B cell (primary cell): ENCODE measurements at regions of chr22 and their contacts with region 1.

Region 1: DNA sequence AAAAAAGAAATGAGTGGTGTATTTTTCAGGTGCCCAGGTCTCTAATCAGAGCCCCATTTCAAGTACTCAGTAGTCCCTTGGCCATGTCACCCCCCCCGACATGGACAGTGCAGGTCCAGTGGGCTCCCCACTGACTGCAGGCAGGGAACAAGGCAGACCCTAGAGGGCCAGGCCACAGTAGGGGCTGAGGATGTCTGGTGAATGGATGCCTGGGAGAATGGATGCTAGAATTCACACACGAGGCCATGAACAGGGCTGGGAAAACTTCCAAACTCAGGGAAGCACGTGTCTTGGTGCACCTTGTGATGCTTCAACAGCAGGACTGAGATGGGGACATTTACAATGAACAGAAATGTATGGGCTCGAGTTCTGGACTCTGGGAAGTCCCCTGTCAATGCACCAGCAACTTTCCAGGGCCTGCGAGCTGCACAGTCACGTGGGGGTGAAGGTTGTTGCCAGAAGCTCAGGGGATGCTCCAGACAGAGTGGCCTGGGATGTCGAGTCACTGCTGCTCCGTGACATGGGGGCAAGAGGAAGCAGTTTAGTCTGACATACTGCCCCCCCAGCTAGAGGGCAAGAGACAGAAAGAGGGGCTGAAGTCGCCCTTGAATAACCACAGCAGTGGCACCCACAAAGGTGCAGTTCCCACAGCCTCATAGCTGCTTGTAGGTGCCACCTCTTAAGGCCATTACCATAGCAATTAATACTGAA is 3.1 kb downstream of the APOBEC3G start:
- DNase-seq: peak; percentile 72
- ATAC-seq: peak; percentile 14
- H3K4me3 ChIP-seq: no peak overlapping the region
- H3K4me3 Mint-ChIP-seq: peak overlapping the region; percentile 68
- H3K27ac ChIP-seq: peak overlapping the region; percentile 63 to 72
- H3K27ac Mint-ChIP-seq: peak overlapping the region; percentile 88
- H3K4me1 ChIP-seq: peaks cover 31 to 52% of the 10 kb centered on the region in 2 donors
- H3K4me1 Mint-ChIP-seq: peaks cover 48% of the 10 kb centered on the region
- H3K27me3 ChIP-seq: no peaks in the 10 kb centered on the region
- H3K27me3 Mint-ChIP-seq: no peaks in the 10 kb centered on the region
- CTCF ChIP-seq: no peak

Region 2: DNA sequence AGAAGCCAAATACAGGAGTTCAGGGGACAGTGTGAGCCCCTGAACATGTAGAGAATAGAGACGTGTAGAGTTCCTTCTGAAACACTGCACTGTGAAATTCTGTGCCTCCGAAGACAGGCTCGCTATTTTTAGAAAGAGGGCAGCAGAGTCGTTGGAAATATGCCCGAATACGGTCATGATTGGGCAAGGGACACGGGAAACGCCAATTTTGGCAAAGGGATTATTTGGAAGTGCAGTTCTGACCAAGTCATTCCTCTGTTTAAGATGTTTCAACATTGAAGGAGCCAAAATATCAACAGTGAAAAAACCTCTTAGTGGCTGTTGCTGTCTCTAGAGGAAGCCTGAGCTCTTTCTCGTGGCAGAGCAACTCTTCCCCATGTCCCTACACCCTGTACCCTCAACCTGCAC is 198.7 kb before region 1 on chr22:
- CTCF ChIA-PET with region 1: no interaction called
- POLR2A ChIA-PET with region 1: no interaction called
- intact Hi-C with region 1: no loop called
- DNase-seq: peak; percentile 3
- ATAC-seq: no peak
- H3K4me3 ChIP-seq: no peak overlapping the region
- H3K4me3 Mint-ChIP-seq: no peak overlapping the region
- H3K27ac ChIP-seq: no peak overlapping the region
- H3K27ac Mint-ChIP-seq: no peak overlapping the region
- H3K4me1 ChIP-seq: no peaks in the 10 kb centered on the region
- H3K4me1 Mint-ChIP-seq: no peaks in the 10 kb centered on the region
- H3K27me3 ChIP-seq: peaks cover 0 to 12% (median 3%) of the 10 kb centered on the region in 4 experiments
- H3K27me3 Mint-ChIP-seq: peaks cover 39% of the 10 kb centered on the region
- CTCF ChIP-seq: no peak

Region 3: DNA sequence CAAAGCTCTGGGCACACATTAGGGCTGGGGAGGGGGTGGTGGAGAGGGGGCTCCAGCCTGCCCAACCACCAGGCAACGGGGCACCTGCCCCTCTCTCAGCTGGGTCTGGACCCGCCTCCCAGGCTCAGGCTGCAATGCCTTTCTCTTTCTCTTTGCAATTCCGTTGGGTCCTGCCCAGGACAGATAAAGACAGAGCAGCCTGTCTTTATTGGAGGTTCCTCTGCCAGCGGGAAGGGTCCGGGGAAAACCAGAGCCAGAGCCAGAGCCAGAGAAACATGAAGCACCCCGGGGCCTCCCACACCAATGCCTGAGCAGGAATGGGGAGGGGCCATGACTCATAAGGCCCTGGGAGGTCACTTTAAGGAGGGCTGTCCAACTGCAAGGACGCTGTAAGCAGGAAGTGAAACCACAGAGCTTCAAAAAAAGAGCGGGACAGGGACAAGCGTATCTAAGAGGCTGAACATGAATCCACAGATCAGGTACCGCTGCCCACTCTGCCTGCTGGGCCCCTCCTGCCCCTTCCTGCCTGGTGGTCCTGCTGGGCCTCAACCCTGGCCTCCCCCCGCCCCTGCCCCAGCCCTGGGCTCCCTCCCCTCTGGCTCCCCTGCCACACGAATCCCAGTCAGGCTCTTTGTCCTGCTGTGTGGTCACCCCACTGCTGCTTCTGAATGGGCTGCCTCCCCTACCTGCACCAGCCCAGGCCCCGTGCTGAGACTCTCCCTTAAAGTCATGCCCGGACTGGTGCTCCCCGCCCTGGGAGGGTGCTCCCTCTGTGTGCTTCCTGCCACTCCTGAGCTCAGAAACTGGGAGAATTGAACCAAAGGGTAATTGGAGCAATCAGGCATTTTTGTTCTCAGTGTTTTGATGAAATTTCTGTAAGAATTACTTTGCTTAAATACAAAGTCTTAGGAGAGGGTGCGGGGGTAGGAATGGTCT is 97.9 kb before region 1 on chr22 and contains the start of gene APOBEC3B:
- CTCF ChIA-PET with region 1: no interaction called
- POLR2A ChIA-PET with region 1: interaction called, 12 read pairs
- intact Hi-C with region 1: no loop called
- DNase-seq: peak; percentile 85
- ATAC-seq: peak; percentile 75
- H3K4me3 ChIP-seq: peak within 1 kb of the TSS in 4 of 5 experiments; percentile 43 to 74 (median 58)
- H3K4me3 Mint-ChIP-seq: peak within 1 kb of the TSS; percentile 97
- H3K27ac ChIP-seq: peak within 1 kb of the TSS in 1 of 2 donors; percentile 57
- H3K27ac Mint-ChIP-seq: peak within 1 kb of the TSS; percentile 92
- H3K4me1 ChIP-seq: peaks cover 11 to 39% of the 10 kb centered on the region in 2 donors
- H3K4me1 Mint-ChIP-seq: peaks cover 44% of the 10 kb centered on the region
- H3K27me3 ChIP-seq: no peaks in the 10 kb centered on the region
- H3K27me3 Mint-ChIP-seq: peaks cover under 1% of the 10 kb centered on the region
- CTCF ChIP-seq: no peak
- total RNA-seq, gene APOBEC3B: 7.9 and 9.8 TPM in 2 replicates

Region 4: DNA sequence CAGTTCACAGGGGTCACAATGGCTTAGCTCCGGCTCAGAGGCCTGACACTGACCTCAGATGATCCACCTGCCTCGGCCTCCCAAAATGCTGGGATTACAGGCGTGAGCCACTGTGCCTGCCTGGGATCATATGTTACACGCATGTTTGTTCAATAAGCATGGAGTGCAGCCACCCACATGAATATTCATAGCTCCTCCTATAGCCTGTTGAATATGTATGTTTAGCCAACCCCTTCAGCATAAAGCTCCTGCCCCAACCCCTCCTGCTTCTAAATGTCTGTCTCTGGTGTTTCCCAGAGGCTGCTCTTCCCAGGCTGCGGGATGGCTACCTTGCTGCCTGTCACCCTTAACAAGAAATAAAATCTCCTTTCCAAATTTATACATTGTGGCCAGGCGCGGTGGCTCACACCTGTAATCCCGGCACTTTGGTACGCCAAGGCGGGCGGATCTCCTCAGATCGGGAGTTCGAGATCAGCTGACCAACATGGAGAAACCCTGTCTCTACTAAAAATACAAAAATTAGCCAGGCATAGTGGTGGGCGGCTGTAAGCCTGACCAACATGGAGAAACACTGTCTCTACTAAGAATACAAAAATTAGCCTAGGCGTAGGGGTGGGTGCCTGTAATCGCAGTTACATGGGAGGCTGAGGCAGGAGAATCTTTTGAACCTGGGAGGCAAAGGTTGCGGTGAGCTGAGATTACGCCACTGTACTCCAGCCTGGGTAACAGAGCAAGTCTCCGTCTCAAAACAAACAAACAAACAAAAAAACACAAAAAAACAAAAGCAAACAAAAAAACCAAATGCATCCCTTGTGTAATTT is 40.7 kb before region 1 on chr22:
- CTCF ChIA-PET with region 1: no interaction called
- POLR2A ChIA-PET with region 1: interaction called, 10 read pairs
- intact Hi-C with region 1: no loop called
- DNase-seq: no peak
- ATAC-seq: no peak
- H3K4me3 ChIP-seq: peak overlapping the region in 1 of 5 experiments; percentile 59
- H3K4me3 Mint-ChIP-seq: peak overlapping the region; percentile 92
- H3K27ac ChIP-seq: peak overlapping the region; percentile 51 to 91
- H3K27ac Mint-ChIP-seq: peak overlapping the region; percentile 90
- H3K4me1 ChIP-seq: peaks cover 20 to 47% of the 10 kb centered on the region in 2 donors
- H3K4me1 Mint-ChIP-seq: peaks cover 40% of the 10 kb centered on the region
- H3K27me3 ChIP-seq: no peaks in the 10 kb centered on the region
- H3K27me3 Mint-ChIP-seq: no peaks in the 10 kb centered on the region
- CTCF ChIP-seq: no peak